Transverse colon (tissue), 4 donors: ENCODE measurements at regions of chr11 and their contacts with region 1.

Region 1: GRCh38 chr11:95705485-95706124 is 84.0 kb downstream of the FAM76B start:
- DNase-seq: peak; percentile 88
- H3K4me3 ChIP-seq: no peak overlapping the region
- H3K27ac ChIP-seq: peak overlapping the region; percentile 40 to 61 (median 45)
- H3K4me1 ChIP-seq: peaks cover 7 to 30% (median 9%) of the 10 kb centered on the region in 4 donors
- H3K27me3 ChIP-seq: no peaks in the 10 kb centered on the region
- CTCF ChIP-seq: peak; percentile 89 to 92 (median 91)
- EP300 ChIP-seq: no peak
- POLR2A ChIP-seq: no peak

Region 2: DNA sequence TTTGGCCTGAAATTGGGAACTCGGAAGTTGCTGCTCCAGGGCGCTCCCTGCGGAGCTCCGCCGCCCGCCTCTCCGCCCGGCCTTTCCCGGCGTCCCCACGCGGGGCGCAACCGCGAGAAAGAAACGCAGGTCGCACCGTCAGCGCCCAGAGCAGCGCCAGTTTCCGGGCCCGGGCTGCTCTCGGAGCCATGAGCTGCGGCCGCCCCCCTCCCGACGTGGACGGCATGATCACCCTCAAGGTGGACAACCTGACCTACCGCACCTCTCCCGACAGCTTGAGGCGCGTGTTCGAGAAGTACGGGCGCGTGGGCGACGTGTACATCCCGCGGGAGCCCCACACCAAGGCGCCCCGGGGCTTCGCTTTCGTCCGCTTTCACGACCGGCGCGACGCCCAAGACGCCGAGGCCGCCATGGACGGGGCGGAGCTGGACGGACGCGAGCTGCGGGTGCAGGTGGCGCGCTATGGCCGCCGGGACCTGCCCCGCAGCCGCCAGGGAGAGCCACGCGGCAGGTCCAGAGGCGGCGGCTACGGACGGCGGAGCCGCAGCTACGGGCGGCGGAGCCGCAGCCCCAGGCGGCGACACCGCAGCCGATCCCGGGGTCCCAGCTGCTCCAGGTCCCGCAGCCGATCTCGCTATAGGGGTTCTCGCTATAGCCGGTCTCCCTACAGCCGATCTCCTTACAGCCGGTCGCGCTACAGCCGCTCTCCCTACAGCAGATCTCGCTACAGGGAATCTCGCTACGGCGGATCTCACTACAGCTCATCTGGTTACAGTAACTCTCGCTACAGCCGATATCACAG is 638.4 kb before region 1 on chr11:
- in situ Hi-C with region 1: loop called in 2 of 4 experiments (anchors 10 kb)
- intact Hi-C with region 1: no loop called
- DNase-seq: peak; percentile 85
- H3K4me3 ChIP-seq: peak overlapping the region; percentile 58 to 85 (median 78)
- H3K27ac ChIP-seq: peak overlapping the region; percentile 94 to 99 (median 98)
- H3K4me1 ChIP-seq: peaks cover 3 to 17% (median 15%) of the 10 kb centered on the region in 4 donors
- H3K27me3 ChIP-seq: no peaks in the 10 kb centered on the region
- CTCF ChIP-seq: peak; percentile 54 to 77 (median 64)
- EP300 ChIP-seq: no peak
- POLR2A ChIP-seq: peak; percentile 84

Region 3: GRCh38 chr11:95076416-95076815 is 629.2 kb before region 1 on chr11:
- in situ Hi-C with region 1: loop called in 1 of 4 experiments (anchors 10 kb)
- intact Hi-C with region 1: no loop called
- DNase-seq: no peak
- H3K4me3 ChIP-seq: no peak overlapping the region
- H3K27ac ChIP-seq: no peak overlapping the region
- H3K4me1 ChIP-seq: peaks cover 5 to 23% (median 12%) of the 10 kb centered on the region in 4 donors
- H3K27me3 ChIP-seq: no peaks in the 10 kb centered on the region
- CTCF ChIP-seq: no peak
- EP300 ChIP-seq: no peak
- POLR2A ChIP-seq: no peak

Region 4: GRCh38 chr11:95150946-95151684 is 554.5 kb before region 1 on chr11:
- in situ Hi-C with region 1: loop called (anchors 5 to 10 kb)
- intact Hi-C with region 1: loop called (anchors 1 kb)
- DNase-seq: peak; percentile 95
- H3K4me3 ChIP-seq: peak overlapping the region; percentile 25 to 54 (median 42)
- H3K27ac ChIP-seq: peak overlapping the region; percentile 86 to 93 (median 90)
- H3K4me1 ChIP-seq: peaks cover 0 to 25% (median 14%) of the 10 kb centered on the region in 4 donors
- H3K27me3 ChIP-seq: no peaks in the 10 kb centered on the region
- CTCF ChIP-seq: peak; percentile 65 to 96 (median 79)
- EP300 ChIP-seq: no peak
- POLR2A ChIP-seq: peak; percentile 74

Region 5: GRCh38 chr11:95156916-95157541 is 548.6 kb before region 1 on chr11:
- in situ Hi-C with region 1: loop called (anchors 5 to 10 kb)
- intact Hi-C with region 1: no loop called
- DNase-seq: no peak
- H3K4me3 ChIP-seq: no peak overlapping the region
- H3K27ac ChIP-seq: peak overlapping the region; percentile 18 to 62 (median 52)
- H3K4me1 ChIP-seq: peaks cover 0 to 23% (median 8%) of the 10 kb centered on the region in 4 donors
- H3K27me3 ChIP-seq: no peaks in the 10 kb centered on the region
- CTCF ChIP-seq: no peak
- EP300 ChIP-seq: no peak
- POLR2A ChIP-seq: no peak

Region 6: GRCh38 chr11:95231127-95231880 is 474.3 kb before region 1 on chr11 and contains the start of gene SESN3:
- in situ Hi-C with region 1: loop called in 1 of 4 experiments (anchors 10 kb)
- intact Hi-C with region 1: no loop called
- DNase-seq: peak; percentile 98
- H3K4me3 ChIP-seq: peak within 1 kb of the TSS; percentile 56 to 98 (median 84)
- H3K27ac ChIP-seq: peak within 1 kb of the TSS; percentile 85 to 95 (median 90)
- H3K4me1 ChIP-seq: peaks cover 6 to 51% (median 9%) of the 10 kb centered on the region in 4 donors
- H3K27me3 ChIP-seq: no peaks in the 10 kb centered on the region
- CTCF ChIP-seq: no peak
- EP300 ChIP-seq: no peak
- POLR2A ChIP-seq: peak; percentile 65
- total RNA-seq, gene SESN3: 3.4 to 16.8 (median 11.0) TPM

Region 7: GRCh38 chr11:95337175-95337957 is 368.2 kb before region 1 on chr11:
- in situ Hi-C with region 1: no loop called
- intact Hi-C with region 1: loop called (anchors 10 kb)
- DNase-seq: peak; percentile 43
- H3K4me3 ChIP-seq: no peak overlapping the region
- H3K27ac ChIP-seq: peak overlapping the region; percentile 80 to 86 (median 81)
- H3K4me1 ChIP-seq: peaks cover 14 to 32% (median 23%) of the 10 kb centered on the region in 4 donors
- H3K27me3 ChIP-seq: no peaks in the 10 kb centered on the region
- CTCF ChIP-seq: no peak
- EP300 ChIP-seq: no peak
- POLR2A ChIP-seq: no peak